ENCODE measurements at regions of chr1 and their contacts with region 1.

Region 1: GRCh38 chr1:16243936-16244649 is 7.1 kb upstream of the CPLANE2 start:
- DNase-seq: peak; percentile 71
- H3K4me3 ChIP-seq: no peak overlapping the region; a peak in 1 of 4 replicates
- H3K27ac ChIP-seq: peak overlapping the region in 1 of 2 experiments; percentile 6; a peak in 1 of 4 replicates
- H3K4me1 ChIP-seq: peaks cover 13 to 38% of the 10 kb centered on the region in 2 experiments; a peak in 3 of 4 replicates
- H3K27me3 ChIP-seq: no peaks in the 10 kb centered on the region
- CTCF ChIP-seq: peak; percentile 83
- EP300 ChIP-seq: no peak
- RAD21 ChIP-seq: peak; percentile 94

Region 2: DNA sequence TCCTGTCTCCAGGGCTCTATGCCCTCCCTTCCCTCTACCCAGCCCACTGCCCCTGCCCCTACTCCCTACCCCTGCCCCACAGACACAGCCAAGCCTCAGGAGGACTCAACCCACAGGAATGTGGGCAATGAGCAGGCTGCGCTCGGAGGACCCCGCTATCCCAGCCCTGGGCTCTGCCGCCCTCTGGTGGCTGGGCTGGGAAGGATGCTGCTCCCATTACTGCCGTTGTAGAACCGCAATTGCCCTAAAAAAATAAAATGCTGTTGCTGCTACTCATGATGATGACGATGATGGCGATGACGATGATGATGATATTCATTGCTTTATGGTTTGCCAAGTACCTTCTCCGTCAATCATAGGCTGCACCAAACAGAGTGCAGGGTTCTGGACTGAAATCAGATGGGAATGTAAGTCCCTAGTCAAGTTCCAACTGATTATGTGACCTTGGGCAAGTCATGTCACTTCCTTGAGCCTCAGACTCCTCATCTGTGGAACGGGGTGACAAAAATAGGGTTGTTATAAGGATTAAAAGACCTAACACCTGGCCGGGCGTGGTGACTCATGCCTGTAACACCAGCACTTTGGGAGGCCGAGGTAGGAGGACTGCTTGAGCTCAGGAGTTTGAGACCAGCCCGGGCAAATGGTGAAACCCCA is 56.2 kb before region 1 on chr1:
- CTCF ChIA-PET with region 1: interaction called, 38 read pairs
- POLR2A ChIA-PET with region 1: no interaction called
- DNase-seq: peak; percentile 86
- H3K4me3 ChIP-seq: peak overlapping the region in 1 of 2 experiments; percentile 7; a peak in 1 of 4 replicates
- H3K27ac ChIP-seq: no peak overlapping the region
- H3K4me1 ChIP-seq: peaks cover 0 to 26% of the 10 kb centered on the region in 2 experiments; a peak in 2 of 4 replicates
- H3K27me3 ChIP-seq: no peaks in the 10 kb centered on the region
- CTCF ChIP-seq: peak; percentile 98
- EP300 ChIP-seq: no peak
- RAD21 ChIP-seq: peak; percentile 99

Region 3: GRCh38 chr1:16217061-16217785 is 26.9 kb before region 1 on chr1:
- CTCF ChIA-PET with region 1: interaction called, 12 read pairs
- POLR2A ChIA-PET with region 1: interaction called, 4 read pairs
- DNase-seq: peak; percentile 99
- H3K4me3 ChIP-seq: peak overlapping the region; percentile 57 to 65
- H3K27ac ChIP-seq: peak overlapping the region; percentile 33 to 84; a peak in 3 of 4 replicates
- H3K4me1 ChIP-seq: peaks cover 0 to 22% of the 10 kb centered on the region in 2 experiments; a peak in 2 of 4 replicates
- H3K27me3 ChIP-seq: no peaks in the 10 kb centered on the region
- CTCF ChIP-seq: no peak
- EP300 ChIP-seq: no peak
- RAD21 ChIP-seq: no peak

Region 4: GRCh38 chr1:16254263-16254928 is 10.3 kb after region 1 on chr1:
- CTCF ChIA-PET with region 1: interaction called, 22 read pairs
- POLR2A ChIA-PET with region 1: no interaction called
- DNase-seq: no peak
- H3K4me3 ChIP-seq: no peak overlapping the region
- H3K27ac ChIP-seq: peak overlapping the region in 1 of 2 experiments; percentile 94; a peak in 2 of 4 replicates
- H3K4me1 ChIP-seq: peaks cover 7 to 48% of the 10 kb centered on the region in 2 experiments
- H3K27me3 ChIP-seq: no peaks in the 10 kb centered on the region
- CTCF ChIP-seq: no peak
- EP300 ChIP-seq: no peak
- RAD21 ChIP-seq: no peak

Region 5: DNA sequence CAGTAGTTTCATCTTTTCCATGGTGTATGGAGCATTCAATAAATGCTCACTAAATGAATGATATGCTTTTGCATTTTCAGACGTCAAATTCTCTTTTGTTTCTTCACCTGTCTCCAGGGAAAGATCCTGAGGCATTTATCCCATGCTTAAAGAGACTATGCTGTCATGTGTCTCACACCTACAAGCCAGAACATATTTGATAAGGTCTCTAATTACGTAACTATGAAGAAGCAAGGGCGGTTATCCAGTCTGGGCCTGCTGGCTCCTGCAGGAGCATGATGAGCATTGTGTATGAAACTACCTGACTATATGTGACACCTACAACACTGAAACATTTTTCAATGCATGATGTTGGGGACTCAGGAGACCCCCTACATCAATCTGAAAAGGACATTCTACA is 56.3 kb after region 1 on chr1:
- CTCF ChIA-PET with region 1: no interaction called
- POLR2A ChIA-PET with region 1: no interaction called
- DNase-seq: no peak
- H3K4me3 ChIP-seq: no peak overlapping the region
- H3K27ac ChIP-seq: no peak overlapping the region
- H3K4me1 ChIP-seq: no peaks in the 10 kb centered on the region
- H3K27me3 ChIP-seq: no peaks in the 10 kb centered on the region
- CTCF ChIP-seq: no peak
- EP300 ChIP-seq: no peak
- RAD21 ChIP-seq: no peak

Region 6: DNA sequence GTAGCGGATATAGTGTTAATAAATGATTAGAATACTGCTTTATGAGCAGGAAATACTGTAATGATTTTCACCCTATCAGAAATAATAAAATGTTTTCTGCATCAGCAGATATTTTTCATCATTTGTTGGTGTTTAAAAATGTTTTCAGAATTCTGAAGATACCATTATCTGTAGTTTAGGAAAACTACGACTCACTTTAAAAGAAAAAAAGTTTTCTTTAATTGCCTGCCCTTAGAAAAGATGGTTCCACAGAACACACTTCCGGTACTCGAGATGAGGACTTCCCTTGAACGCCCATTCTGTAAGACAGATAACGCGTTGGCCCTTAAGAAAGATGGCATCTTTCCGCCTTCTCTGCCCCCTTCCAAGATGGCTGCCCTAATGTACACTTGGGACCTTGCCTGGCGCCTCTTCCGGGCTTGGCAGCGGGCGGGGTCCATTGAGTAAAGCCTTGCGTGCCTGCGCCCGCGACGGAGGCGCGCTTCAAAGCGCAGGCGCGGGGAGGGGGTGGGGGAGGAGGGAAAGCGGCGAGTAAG is 122.7 kb after region 1 on chr1 and contains the start of gene SZRD1:
- CTCF ChIA-PET with region 1: interaction called, 25 read pairs
- POLR2A ChIA-PET with region 1: interaction called, 5 read pairs
- DNase-seq: peak; percentile 94
- H3K4me3 ChIP-seq: peak within 1 kb of the TSS; percentile 76 to 78
- H3K27ac ChIP-seq: peak within 1 kb of the TSS; percentile 95 to 97
- H3K4me1 ChIP-seq: peaks cover 9 to 11% of the 10 kb centered on the region in 2 experiments; a peak in 3 of 4 replicates
- H3K27me3 ChIP-seq: no peaks in the 10 kb centered on the region
- CTCF ChIP-seq: no peak
- EP300 ChIP-seq: no peak
- RAD21 ChIP-seq: no peak
- polyA plus RNA-seq, gene SZRD1: 100 and 119 TPM in 2 replicates

Measured in SK-N-SH (cell line).